GM12878 (cell line): ENCODE measurements at regions of chr10 and their contacts with region 1.

Region 1: GRCh38 chr10:51875610-51876009 is 176.2 kb upstream of the CSTF2T start:
- DNase-seq: no peak
- ATAC-seq: no peak
- H3K4me3 ChIP-seq: no peak overlapping the region
- H3K27ac ChIP-seq: no peak overlapping the region
- H3K4me1 ChIP-seq: no peaks in the 10 kb centered on the region; the same call in 1 of the 2 replicates
- H3K27me3 ChIP-seq: no peaks in the 10 kb centered on the region
- CTCF ChIP-seq: no peak
- EP300 ChIP-seq: no peak
- POLR2A ChIP-seq: no peak
- RAD21 ChIP-seq: no peak

Region 2: GRCh38 chr10:51479711-51480110 is 395.9 kb before region 1 on chr10:
- CTCF ChIA-PET with region 1: no interaction called
- POLR2A ChIA-PET with region 1: no interaction called
- RAD21 ChIA-PET with region 1: no interaction called
- SMC1A ChIA-PET with region 1: no interaction called
- in situ Hi-C with region 1: no loop called
- intact Hi-C with region 1: no loop called
- DNase-seq: no peak
- ATAC-seq: no peak
- H3K4me3 ChIP-seq: no peak overlapping the region
- H3K27ac ChIP-seq: no peak overlapping the region
- H3K4me1 ChIP-seq: no peaks in the 10 kb centered on the region
- H3K27me3 ChIP-seq: no peaks in the 10 kb centered on the region
- CTCF ChIP-seq: no peak
- EP300 ChIP-seq: no peak
- POLR2A ChIP-seq: no peak
- RAD21 ChIP-seq: no peak

Region 3: DNA sequence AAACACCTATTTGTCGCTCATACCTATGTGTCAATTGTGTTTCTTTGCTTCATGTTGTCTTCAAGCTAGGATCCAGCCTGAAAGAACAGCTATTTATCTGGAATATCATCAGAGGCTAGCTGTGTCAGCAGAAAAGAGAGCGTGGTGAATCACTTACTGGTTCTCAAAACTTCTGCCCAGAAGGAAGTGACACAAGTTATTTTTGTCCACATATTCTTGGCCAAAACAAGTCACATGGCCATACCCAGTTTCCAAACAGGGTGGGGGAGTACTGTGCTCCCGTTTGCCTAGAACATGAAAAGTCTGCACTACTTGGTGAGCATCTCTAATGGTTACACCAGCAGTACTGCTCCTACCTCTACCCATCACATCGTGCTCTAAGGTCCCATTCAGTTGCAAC is 15.4 kb before region 1 on chr10:
- CTCF ChIA-PET with region 1: no interaction called
- POLR2A ChIA-PET with region 1: no interaction called
- RAD21 ChIA-PET with region 1: interaction called, 4 read pairs
- SMC1A ChIA-PET with region 1: interaction called, 17 read pairs
- in situ Hi-C with region 1: no loop called
- intact Hi-C with region 1: no loop called
- DNase-seq: no peak
- ATAC-seq: no peak
- H3K4me3 ChIP-seq: no peak overlapping the region
- H3K27ac ChIP-seq: no peak overlapping the region
- H3K4me1 ChIP-seq: peaks cover 3% of the 10 kb centered on the region
- H3K27me3 ChIP-seq: no peaks in the 10 kb centered on the region; a peak in 1 of 4 replicates
- CTCF ChIP-seq: no peak
- EP300 ChIP-seq: no peak
- POLR2A ChIP-seq: no peak
- RAD21 ChIP-seq: no peak